ENCODE measurements at regions of chr7 and their contacts with region 1.

Region 1: GRCh38 chr7:10412422-10413019 is 561.2 kb upstream of the PHF14 start:
- DNase-seq: no peak
- ATAC-seq: no peak
- H3K4me3 ChIP-seq: no peak overlapping the region
- H3K27ac ChIP-seq: no peak overlapping the region
- H3K4me1 ChIP-seq: no peaks in the 10 kb centered on the region
- H3K27me3 ChIP-seq: no peaks in the 10 kb centered on the region

Region 2: DNA sequence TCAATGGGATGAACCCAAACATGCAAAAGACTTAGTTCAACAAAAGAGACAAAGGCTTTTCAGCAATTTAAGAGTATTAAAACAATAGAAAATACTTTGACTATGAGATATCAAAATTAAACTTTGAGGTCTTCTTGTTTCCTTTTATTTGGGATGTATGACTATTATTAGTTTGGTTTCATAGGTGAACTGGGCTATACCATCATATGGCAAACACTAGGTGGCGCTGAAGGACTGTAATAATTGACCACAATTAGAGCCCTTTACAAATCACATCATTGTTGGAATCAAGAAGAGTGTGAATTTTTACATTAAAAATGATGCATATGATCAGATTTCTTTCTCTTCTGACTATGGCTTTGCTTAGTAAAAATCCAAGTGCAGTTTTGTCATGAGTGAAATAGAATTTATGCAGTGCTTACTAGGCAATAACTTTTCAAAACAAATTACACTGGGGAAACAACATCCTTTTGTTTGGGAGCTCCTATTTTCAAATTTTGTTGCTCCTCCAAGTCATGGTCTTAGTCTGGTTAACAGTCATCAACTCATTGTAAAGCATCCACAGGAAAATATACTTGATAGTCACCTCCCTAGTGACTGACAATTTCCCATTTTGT is 1993.8 kb before region 1 on chr7:
- intact Hi-C with region 1: loop called in 1 of 4 experiments (anchors 10 kb)
- DNase-seq: peak in 1 of 3 donors; percentile 25
- ATAC-seq: no peak
- H3K4me3 ChIP-seq: no peak overlapping the region
- H3K27ac ChIP-seq: no peak overlapping the region
- H3K4me1 ChIP-seq: no peaks in the 10 kb centered on the region
- H3K27me3 ChIP-seq: no peaks in the 10 kb centered on the region

Region 3: GRCh38 chr7:9921326-9921725 is 491.2 kb before region 1 on chr7:
- intact Hi-C with region 1: no loop called
- DNase-seq: no peak
- ATAC-seq: no peak
- H3K4me3 ChIP-seq: no peak overlapping the region
- H3K27ac ChIP-seq: no peak overlapping the region
- H3K4me1 ChIP-seq: no peaks in the 10 kb centered on the region
- H3K27me3 ChIP-seq: no peaks in the 10 kb centered on the region

Region 4: GRCh38 chr7:10022957-10023356 is 389.6 kb before region 1 on chr7:
- intact Hi-C with region 1: loop called in 1 of 4 experiments (anchors 5 kb)
- DNase-seq: no peak
- ATAC-seq: peak; percentile 47 to 68
- H3K4me3 ChIP-seq: no peak overlapping the region
- H3K27ac ChIP-seq: no peak overlapping the region
- H3K4me1 ChIP-seq: no peaks in the 10 kb centered on the region
- H3K27me3 ChIP-seq: no peaks in the 10 kb centered on the region